HCT116 (cell line): ENCODE measurements at regions of chr17 and their contacts with region 1.

Region 1: DNA sequence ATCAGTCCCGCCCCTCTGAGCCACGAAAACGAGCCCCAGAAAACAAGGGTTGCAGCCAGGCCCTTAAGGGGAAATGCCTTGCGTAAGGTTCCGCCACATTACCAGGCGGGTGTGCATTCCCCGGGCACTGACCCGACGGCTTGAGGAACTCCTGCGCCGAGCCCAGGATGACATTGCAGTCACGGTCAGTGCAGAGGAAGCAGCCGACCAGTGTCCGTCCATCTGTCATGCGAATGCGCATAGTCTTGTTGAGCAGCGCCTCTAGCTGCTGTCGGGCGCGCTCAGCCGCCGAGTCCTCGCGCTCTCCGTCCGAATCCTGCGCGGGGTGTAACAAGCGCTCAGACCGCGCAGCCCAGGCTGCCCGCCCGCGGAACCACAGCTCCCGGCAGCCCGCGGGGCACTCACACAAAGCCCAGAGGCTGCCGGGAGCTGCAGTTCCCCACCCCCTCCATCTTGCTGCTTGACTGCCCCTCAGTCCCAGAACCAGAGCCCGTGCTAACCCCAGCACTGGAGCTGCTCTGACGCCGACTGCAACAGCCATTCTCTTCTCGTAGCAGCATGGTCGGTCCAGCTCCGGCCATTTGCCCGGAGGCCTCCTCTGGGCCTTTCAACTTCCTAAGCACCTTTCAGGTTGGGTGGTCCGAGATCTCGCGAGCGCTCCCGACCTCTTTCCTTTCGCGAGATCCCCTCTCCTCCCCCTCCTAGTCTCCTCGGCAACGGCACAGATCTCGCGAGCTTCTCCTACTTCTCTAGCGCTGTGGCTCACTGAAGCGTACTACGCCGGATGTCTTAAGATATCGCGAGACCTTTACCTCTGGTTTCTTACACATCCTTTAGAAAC is at the start of gene NAA38:
- DNase-seq: peak; percentile 99
- ATAC-seq: peak; percentile 85
- H3K4me3 ChIP-seq: peak within 1 kb of the TSS; percentile 67 to 94
- H3K27ac ChIP-seq: peak within 1 kb of the TSS; percentile 92
- H3K4me1 ChIP-seq: peaks cover 10 to 28% of the 10 kb centered on the region in 2 experiments; a peak in 3 of 4 replicates
- H3K27me3 ChIP-seq: no peaks in the 10 kb centered on the region
- CTCF ChIP-seq: peak; percentile 32 to 48 (median 40); a peak in 5 of 6 replicates
- POLR2A ChIP-seq: peak; percentile 12
- RAD21 ChIP-seq: peak; percentile 58
- total RNA-seq, gene NAA38: 103 TPM

Region 2: DNA sequence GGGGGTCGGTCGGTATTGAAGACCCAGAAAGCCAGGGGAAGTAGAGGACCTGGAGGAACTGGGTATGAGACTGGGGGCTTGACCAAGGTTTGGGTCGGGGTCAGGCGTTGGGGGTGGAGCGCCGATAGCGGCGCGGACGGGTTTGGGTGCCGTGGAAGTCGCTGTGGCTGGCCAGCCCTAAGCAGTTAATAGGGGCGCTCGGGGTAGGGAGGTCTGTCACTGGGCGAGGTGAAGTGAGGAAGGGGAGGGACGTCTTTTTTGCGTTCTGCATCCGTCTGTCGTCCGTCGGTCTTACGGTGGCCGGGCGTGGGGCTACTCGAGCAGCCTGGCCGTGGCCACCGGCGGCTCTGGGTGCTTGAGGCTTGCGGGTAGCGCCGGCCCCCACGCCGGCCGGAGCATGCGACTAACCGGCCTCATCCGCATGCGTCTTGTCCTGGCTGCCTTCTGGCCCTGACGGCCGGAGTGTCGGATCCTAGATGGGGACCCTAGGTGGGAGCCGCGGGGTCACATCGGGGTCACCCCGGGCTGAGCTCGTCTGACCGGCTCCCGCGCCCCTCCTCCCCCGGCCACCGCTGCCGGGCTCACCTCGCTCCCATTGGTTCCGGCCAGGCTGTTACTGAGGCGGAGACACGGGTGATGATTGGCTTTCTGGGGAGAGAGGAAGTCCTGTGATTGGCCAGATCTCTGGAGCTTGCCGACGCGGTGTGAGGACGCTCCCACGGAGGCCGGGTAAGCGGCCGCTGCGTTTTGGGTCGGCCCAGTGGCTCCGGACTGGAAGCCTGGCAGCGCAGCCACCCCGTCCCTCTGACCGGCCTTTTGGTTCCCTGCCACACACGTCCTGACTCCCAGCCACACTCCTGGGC is 12.6 kb before region 1 on chr17:
- CTCF ChIA-PET with region 1: interaction called, 6 read pairs
- POLR2A ChIA-PET with region 1: interaction called, 45 read pairs
- RAD21 ChIA-PET with region 1: no interaction called
- intact Hi-C with region 1: no loop called
- DNase-seq: peak; percentile 90
- ATAC-seq: peak; percentile 77
- H3K4me3 ChIP-seq: peak overlapping the region; percentile 92 to 94
- H3K27ac ChIP-seq: peak overlapping the region; percentile 97
- H3K4me1 ChIP-seq: peaks cover 22 to 34% of the 10 kb centered on the region in 2 experiments
- H3K27me3 ChIP-seq: no peaks in the 10 kb centered on the region
- CTCF ChIP-seq: no peak
- POLR2A ChIP-seq: peak; percentile 51
- RAD21 ChIP-seq: no peak

Region 3: GRCh38 chr17:7887482-7888183 is 30.5 kb after region 1 on chr17:
- CTCF ChIA-PET with region 1: interaction called, 3 read pairs
- POLR2A ChIA-PET with region 1: no interaction called
- RAD21 ChIA-PET with region 1: no interaction called
- intact Hi-C with region 1: loop called (anchors 1 kb)
- DNase-seq: peak; percentile 84
- ATAC-seq: peak; percentile 85
- H3K4me3 ChIP-seq: peak overlapping the region; percentile 56 to 82
- H3K27ac ChIP-seq: peak overlapping the region; percentile 97
- H3K4me1 ChIP-seq: peaks cover 39 to 53% of the 10 kb centered on the region in 2 experiments
- H3K27me3 ChIP-seq: no peaks in the 10 kb centered on the region
- CTCF ChIP-seq: no peak
- POLR2A ChIP-seq: peak; percentile 59
- RAD21 ChIP-seq: no peak